ENCODE measurements at regions of chr6 and their contacts with region 1.

Region 1: GRCh38 chr6:152948150-152948768 is 34.6 kb downstream of the FBXO5 start:
- DNase-seq: peak; percentile 32
- CTCF ChIP-seq: peak; percentile 52

Region 2: DNA sequence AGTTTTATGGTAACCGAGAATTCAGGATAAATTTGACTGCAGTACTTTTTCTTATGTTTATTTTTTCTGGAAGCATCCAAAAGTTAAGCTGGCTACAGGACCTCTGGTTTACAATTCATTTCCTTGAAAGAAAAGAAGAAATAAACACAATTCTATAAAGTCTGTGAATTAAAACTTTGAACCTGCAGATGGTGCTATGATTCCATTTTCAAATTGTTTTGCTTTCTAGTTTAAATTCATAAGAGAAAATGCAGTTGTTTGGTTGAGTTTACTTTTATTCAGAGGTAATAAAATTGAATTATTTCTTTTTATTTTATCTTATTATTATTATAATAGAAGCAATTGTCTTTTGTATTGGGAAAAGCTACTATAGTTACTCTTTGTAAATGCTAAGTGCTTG is 199.4 kb before region 1 on chr6:
- CTCF ChIA-PET with region 1: interaction called, 14 read pairs
- POLR2A ChIA-PET with region 1: no interaction called
- DNase-seq: no peak
- CTCF ChIP-seq: peak; percentile 11

Region 3: GRCh38 chr6:152863618-152864326 is 84.5 kb before region 1 on chr6:
- CTCF ChIA-PET with region 1: interaction called, 12 read pairs
- POLR2A ChIA-PET with region 1: no interaction called
- DNase-seq: peak; percentile 28
- CTCF ChIP-seq: peak; percentile 60

Region 4: GRCh38 chr6:152922706-152923105 is 25.6 kb before region 1 on chr6:
- CTCF ChIA-PET with region 1: interaction called, 11 read pairs
- POLR2A ChIA-PET with region 1: no interaction called
- DNase-seq: no peak
- CTCF ChIP-seq: no peak

Region 5: DNA sequence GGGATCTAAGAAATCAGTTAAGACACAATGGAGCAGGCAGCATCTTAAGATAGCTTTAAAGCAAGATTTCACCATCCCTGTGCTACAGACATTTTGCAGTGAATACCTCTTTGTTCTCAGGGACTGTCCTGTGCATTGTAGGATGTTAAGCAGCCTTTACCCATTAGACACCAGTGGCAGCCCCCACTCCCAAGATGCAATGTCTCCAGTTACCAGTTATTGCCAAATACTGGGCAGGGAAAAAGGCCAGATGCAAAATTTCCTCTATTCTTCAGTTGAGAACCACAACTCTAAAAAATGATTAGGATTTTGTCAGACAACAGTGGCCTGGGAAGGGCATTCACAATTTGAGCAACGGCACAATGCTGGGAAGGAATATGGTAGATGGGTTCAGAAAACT is 28.5 kb after region 1 on chr6:
- CTCF ChIA-PET with region 1: interaction called, 12 read pairs
- POLR2A ChIA-PET with region 1: no interaction called
- DNase-seq: no peak
- CTCF ChIP-seq: no peak